Left cardiac atrium (tissue), 4 donors: ENCODE measurements at regions of chr12 and their contacts with region 1.

Region 1: GRCh38 chr12:80269803-80270552 is 170.6 kb downstream of the OTOGL start:
- DNase-seq: no peak
- ATAC-seq: peak; percentile 65 to 75

Region 2: DNA sequence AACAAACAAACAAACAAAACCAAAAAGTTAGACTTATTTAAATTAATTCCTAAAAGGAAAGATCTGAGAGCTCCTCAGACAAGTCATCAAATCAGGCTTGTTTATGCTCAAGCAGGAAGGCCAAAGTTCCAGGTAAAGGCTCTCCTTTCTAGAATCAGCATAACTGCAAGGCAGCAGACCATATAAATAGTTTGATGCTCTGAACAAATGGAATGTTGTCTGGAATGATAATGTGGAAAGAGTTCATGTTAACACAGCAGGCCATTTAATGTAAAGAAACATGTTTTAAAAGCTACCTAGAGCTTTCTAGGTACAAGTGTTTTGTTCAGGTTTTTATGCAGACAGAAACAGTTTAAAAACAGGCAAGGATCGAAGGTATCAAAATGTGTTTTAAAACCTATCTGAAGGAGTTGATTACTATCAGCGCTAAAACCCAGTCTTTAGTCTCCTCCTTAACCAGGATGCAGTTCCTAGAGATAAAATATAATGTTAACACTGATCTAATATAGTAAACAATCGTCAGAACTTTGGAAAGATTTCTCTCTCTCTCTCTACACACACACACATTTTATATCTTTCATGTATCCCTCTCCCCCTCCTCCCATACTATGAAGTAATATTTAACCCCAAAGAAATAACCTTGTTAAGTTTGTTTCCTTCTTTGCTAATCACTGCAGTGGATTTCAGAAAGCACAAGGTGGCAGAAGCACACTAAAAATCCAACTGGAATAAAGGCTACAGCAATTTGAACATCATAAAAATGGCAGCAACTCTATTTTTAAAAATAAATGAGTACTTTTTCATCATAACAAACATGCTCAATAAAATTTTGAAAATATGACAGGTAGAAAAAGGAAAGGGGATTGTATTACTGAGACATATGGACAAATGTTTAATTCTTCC is 714.7 kb before region 1 on chr12:
- intact Hi-C with region 1: loop called in 1 of 2 experiments (anchors 5 kb)
- DNase-seq: no peak
- ATAC-seq: peak; percentile 20 to 41

Region 3: GRCh38 chr12:80195074-80195726 is 74.8 kb before region 1 on chr12:
- intact Hi-C with region 1: loop called (anchors 1 to 5 kb)
- DNase-seq: peak; percentile 34
- ATAC-seq: peak; percentile 67 to 73